HCT116 (cell line): ENCODE measurements at regions of chr3 and their contacts with region 1.

Region 1: DNA sequence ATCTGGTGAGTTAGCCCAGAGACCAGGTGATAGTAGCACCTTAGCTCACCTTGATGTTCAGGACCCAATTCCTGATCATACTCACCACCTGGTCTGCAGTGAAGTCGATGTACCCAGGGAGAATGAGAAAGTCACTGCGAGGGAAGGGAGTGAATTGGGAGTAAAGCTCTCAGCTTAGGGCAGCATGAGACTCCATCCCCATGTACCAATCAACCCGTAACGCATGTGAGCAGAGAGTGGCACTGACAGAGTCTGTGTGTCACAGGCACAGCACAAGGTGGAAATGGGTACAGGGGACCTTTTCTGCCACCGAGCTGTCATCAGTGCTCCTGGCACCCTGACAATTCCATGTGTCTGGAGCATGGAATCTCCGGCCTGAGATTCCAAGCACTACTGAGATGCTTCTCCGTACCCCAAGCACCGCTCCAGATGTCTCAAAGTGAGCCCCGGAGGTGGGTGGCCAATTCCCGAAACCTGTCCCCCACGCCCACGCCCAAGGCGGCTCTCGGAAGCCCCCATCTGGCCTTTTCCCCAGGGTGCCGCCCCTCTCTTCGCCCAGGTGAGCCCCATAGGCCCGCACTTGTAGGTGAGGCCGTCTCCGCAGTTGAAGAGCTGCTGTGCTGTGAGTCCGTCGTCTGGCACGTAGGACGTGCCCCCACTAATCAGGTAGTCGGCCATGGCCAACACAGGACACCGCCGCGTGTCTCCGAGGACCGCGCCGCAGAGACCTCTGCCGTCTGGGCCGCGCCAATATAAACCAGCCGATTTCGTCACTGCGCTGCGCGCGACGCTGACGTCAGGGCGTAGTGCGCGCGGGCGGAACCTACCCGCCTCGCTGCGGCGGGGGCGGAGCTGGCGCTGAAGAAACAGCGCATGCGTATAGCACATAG is at the start of gene IMPDH2:
- DNase-seq: peak; percentile 87
- ATAC-seq: peak; percentile 88
- H3K4me3 ChIP-seq: peak within 1 kb of the TSS; percentile 97
- H3K27ac ChIP-seq: peak within 1 kb of the TSS; percentile 68
- H3K4me1 ChIP-seq: peaks cover 3 to 38% of the 10 kb centered on the region in 2 experiments; a peak in 3 of 4 replicates
- H3K27me3 ChIP-seq: no peaks in the 10 kb centered on the region
- CTCF ChIP-seq: no peak
- POLR2A ChIP-seq: peak; percentile 99
- RAD21 ChIP-seq: no peak
- total RNA-seq, gene IMPDH2: 599 TPM

Region 2: GRCh38 chr3:49007068-49007770 is 21.7 kb before region 1 on chr3 and contains the start of gene WDR6:
- CTCF ChIA-PET with region 1: interaction called, 3 read pairs
- POLR2A ChIA-PET with region 1: interaction called, 21 read pairs
- RAD21 ChIA-PET with region 1: no interaction called
- intact Hi-C with region 1: no loop called
- DNase-seq: peak; percentile 94
- ATAC-seq: peak; percentile 91
- H3K4me3 ChIP-seq: peak within 1 kb of the TSS; percentile 72 to 86
- H3K27ac ChIP-seq: peak within 1 kb of the TSS; percentile 99
- H3K4me1 ChIP-seq: peaks cover 3 to 26% of the 10 kb centered on the region in 2 experiments; a peak in 3 of 4 replicates
- H3K27me3 ChIP-seq: no peaks in the 10 kb centered on the region
- CTCF ChIP-seq: peak in 2 of 3 experiments; percentile 44 to 61; a peak in 3 of 6 replicates
- POLR2A ChIP-seq: peak; percentile 74
- RAD21 ChIP-seq: no peak
- total RNA-seq, gene WDR6: 174 TPM

Region 3: GRCh38 chr3:49053543-49053942 is 24.6 kb after region 1 on chr3:
- CTCF ChIA-PET with region 1: no interaction called
- POLR2A ChIA-PET with region 1: interaction called, 12 read pairs
- RAD21 ChIA-PET with region 1: no interaction called
- intact Hi-C with region 1: no loop called
- DNase-seq: no peak
- ATAC-seq: no peak
- H3K4me3 ChIP-seq: no peak overlapping the region
- H3K27ac ChIP-seq: no peak overlapping the region
- H3K4me1 ChIP-seq: no peaks in the 10 kb centered on the region
- H3K27me3 ChIP-seq: no peaks in the 10 kb centered on the region
- CTCF ChIP-seq: no peak
- POLR2A ChIP-seq: no peak
- RAD21 ChIP-seq: no peak

Region 4: GRCh38 chr3:49484471-49484870 is 455.6 kb after region 1 on chr3:
- CTCF ChIA-PET with region 1: no interaction called
- POLR2A ChIA-PET with region 1: no interaction called
- RAD21 ChIA-PET with region 1: no interaction called
- intact Hi-C with region 1: no loop called
- DNase-seq: no peak
- ATAC-seq: peak; percentile 17
- H3K4me3 ChIP-seq: no peak overlapping the region
- H3K27ac ChIP-seq: peak overlapping the region; percentile 10; the same call in 1 of the 2 replicates
- H3K4me1 ChIP-seq: peaks cover 20 to 30% of the 10 kb centered on the region in 2 experiments
- H3K27me3 ChIP-seq: no peaks in the 10 kb centered on the region
- CTCF ChIP-seq: no peak
- POLR2A ChIP-seq: no peak
- RAD21 ChIP-seq: no peak